ENCODE measurements at regions of chr3 and their contacts with region 1.

Region 1: DNA sequence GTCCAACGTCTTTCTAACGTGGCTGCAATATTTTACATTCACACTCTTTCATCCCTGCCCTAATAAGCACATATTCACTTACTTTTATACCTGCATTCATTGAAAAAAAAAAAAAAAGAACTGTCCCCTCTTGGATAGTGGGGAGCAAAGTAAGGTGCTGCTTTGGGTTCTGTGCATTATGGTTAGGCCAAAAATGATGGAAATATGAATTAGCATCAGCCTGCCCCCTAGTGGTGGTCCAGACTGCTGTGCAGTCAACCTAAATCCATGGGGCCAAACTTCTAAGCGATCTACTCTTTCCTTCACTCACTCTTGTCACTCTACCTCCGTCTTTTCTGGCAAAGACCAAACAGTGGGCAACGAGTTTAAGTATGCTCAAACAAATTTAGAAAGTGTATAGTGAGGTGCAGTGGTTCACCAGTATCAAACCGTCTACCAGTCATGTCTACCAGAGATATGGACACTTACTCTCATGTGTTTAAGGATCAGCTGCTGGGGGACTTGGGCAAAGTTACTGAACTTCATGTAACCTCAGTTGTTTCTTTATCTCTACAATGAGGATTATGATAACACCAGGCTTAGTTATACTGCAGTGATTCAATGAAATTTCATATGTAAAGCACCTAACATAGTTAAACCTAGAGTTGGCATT is 61.5 kb upstream of the GRM7 start:
- DNase-seq: no peak
- ATAC-seq: no peak

Region 2: GRCh38 chr3:5226783-5227182 is 1572.6 kb before region 1 on chr3:
- intact Hi-C with region 1: loop called (anchors 5 kb)
- DNase-seq: no peak
- ATAC-seq: no peak

Region 3: DNA sequence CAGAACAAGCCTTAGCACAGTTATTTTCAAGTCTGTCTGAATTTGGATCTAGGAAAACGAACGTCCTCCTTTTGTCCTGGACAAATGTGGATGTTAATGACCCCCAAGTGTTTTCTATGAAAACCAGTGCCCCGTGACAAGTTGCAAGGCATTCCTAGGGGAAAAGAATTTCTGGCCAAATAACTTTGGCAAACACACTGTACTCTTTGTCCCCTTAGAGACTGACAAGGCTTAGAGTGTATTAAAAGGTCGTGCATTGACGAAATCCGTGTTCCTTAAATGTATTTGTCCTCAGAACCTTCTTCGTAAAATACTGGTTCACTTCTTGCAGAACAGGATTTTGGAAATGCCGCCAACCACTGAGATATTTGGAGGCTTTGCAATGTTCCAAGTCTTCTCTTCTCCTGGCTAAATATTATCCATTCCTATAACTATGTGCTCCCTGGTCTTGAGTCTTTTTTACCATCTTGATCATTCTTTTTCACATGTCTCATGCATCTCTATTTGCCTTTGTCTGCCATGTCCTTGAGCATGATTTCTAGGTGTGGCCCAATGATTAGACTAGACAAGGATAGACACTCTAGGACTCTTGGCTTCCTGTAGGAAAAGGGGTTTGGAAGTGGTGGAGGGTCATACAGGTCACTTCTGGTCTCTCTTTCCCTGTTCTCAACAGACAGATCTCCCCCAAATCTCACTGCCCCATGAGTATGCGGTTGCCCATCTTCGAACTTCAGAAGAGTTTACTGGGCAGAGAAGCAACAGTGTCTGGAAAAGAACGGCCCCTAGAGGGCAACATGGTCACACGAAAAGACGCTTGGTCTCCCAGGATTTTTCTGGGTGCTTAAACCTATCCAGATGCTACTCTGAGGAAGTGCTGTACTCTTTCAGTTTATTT is 1494.4 kb before region 1 on chr3:
- intact Hi-C with region 1: loop called (anchors 10 kb)
- DNase-seq: no peak
- ATAC-seq: peak; percentile 68

Region 4: GRCh38 chr3:6392123-6392522 is 407.3 kb before region 1 on chr3:
- intact Hi-C with region 1: loop called (anchors 5 kb)
- DNase-seq: no peak
- ATAC-seq: no peak

Measured in Right ventricle myocardium inferior (tissue), 1 donor.